Naive thymus-derived CD4-positive, alpha-beta T cell (primary cell): ENCODE measurements at regions of chr3 and their contacts with region 1.

Region 1: DNA sequence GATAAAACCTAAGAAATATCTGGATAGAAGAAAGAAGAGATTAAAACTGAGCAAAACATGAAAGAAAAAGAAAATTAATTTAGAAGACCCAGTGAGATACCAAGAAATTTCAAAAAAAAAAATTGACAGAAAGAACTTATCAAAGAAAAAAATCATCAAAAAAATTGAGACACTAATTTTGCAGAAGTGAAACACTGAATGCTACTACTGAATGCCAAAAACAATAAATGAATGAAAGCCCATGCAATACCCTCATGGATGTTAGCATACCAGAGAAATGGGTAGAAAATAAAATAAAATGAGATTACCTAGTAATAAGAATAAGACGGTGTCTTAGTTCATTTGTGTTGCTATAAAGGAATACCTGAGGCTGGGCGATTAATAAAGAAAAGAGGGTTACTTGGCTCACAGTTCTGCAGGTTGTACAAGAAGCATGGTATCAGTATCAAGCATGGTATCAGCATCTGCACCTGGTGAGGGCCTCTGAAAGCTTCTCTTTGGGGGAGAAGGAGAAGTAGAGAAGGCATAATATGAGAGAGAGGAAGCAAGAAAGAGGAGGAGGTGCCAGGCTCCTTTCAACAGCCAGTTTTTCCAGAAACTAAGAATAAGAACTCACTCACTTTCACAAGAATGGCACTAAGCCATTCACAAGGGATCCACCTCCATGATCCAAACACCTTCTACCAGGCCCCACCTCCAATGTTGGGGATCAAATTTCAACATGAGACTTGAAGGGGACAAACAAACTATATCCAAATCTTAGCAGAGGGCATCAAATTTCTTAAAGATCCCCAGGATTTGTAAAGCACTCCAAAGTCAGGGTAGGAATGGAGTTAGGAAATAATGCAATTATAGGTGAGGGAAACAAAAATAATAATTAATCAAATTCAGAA is 73.2 kb downstream of the BTLA start:
- DNase-seq: no peak
- ATAC-seq: no peak
- H3K4me3 ChIP-seq: no peak overlapping the region
- H3K4me3 Mint-ChIP-seq: no peak overlapping the region
- H3K27ac ChIP-seq: no peak overlapping the region
- H3K27ac Mint-ChIP-seq: peak overlapping the region in 1 of 9 donors; percentile 17
- H3K4me1 ChIP-seq: no peaks in the 10 kb centered on the region
- H3K4me1 Mint-ChIP-seq: peaks cover 0 to 7% (median under 1%) of the 10 kb centered on the region in 7 donors
- H3K27me3 ChIP-seq: no peaks in the 10 kb centered on the region
- H3K27me3 Mint-ChIP-seq: peaks cover 0 to 3% (median 0%) of the 10 kb centered on the region in 5 donors

Region 2: GRCh38 chr3:112445839-112446238 is 19.7 kb after region 1 on chr3:
- CTCF ChIA-PET with region 1: no interaction called
- POLR2A ChIA-PET with region 1: no interaction called
- intact Hi-C with region 1: loop called in 1 of 2 experiments (anchors 1 kb)
- DNase-seq: no peak
- ATAC-seq: no peak
- H3K4me3 ChIP-seq: no peak overlapping the region
- H3K4me3 Mint-ChIP-seq: no peak overlapping the region
- H3K27ac ChIP-seq: no peak overlapping the region
- H3K27ac Mint-ChIP-seq: no peak overlapping the region
- H3K4me1 ChIP-seq: no peaks in the 10 kb centered on the region
- H3K4me1 Mint-ChIP-seq: peaks cover 2 to 19% (median 11%) of the 10 kb centered on the region in 7 donors
- H3K27me3 ChIP-seq: no peaks in the 10 kb centered on the region
- H3K27me3 Mint-ChIP-seq: no peaks in the 10 kb centered on the region